ENCODE measurements at regions of chr11 and their contacts with region 1.

Region 1: GRCh38 chr11:36899800-36900199 is 301.8 kb upstream of the RAG2 start:
- DNase-seq: no peak
- CTCF ChIP-seq: no peak

Region 2: GRCh38 chr11:36792996-36793914 is 106.5 kb before region 1 on chr11:
- in situ Hi-C with region 1: loop called (anchors 25 kb)
- DNase-seq: no peak
- CTCF ChIP-seq: no peak

Region 3: GRCh38 chr11:36809303-36809702 is 90.5 kb before region 1 on chr11:
- in situ Hi-C with region 1: no loop called
- DNase-seq: no peak
- CTCF ChIP-seq: no peak

Region 4: DNA sequence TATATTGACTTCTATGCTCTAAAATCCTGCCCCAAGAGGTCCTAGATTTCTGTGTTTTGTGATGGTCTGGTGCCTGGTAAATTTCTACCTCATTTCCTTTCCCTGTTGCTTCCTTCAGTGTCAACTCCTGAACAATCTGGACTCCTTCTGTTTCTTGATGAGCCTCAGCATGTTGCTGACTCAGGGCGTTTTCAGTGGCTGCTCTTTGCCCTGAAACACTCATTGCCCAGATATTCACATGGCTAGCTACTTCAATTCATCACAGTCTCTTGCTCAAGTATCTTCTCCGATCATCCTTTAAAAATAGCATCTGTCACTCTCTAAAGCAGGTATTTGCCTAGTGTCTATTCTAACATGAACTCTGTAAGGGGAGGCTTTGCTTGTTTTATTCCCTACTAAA is 224.6 kb after region 1 on chr11:
- in situ Hi-C with region 1: no loop called
- DNase-seq: no peak
- CTCF ChIP-seq: no peak